ENCODE measurements at regions of chr9 and their contacts with region 1.

Region 1: GRCh38 chr9:121185774-121186403 is 15.8 kb downstream of the RAB14 start:
- DNase-seq: no peak
- H3K4me3 ChIP-seq: no peak overlapping the region
- H3K27ac ChIP-seq: no peak overlapping the region
- H3K4me1 ChIP-seq: no peaks in the 10 kb centered on the region
- H3K27me3 ChIP-seq: no peaks in the 10 kb centered on the region
- CTCF ChIP-seq: no peak
- POLR2A ChIP-seq: no peak

Region 2: GRCh38 chr9:121201738-121202533 is 16.0 kb after region 1 on chr9 and contains the start of gene RAB14:
- CTCF ChIA-PET with region 1: interaction called, 6 read pairs
- POLR2A ChIA-PET with region 1: no interaction called
- dilution Hi-C with region 1: no loop called
- intact Hi-C with region 1: loop called (anchors 2 kb)
- DNase-seq: peak; percentile 98
- H3K4me3 ChIP-seq: peak within 1 kb of the TSS; percentile 85 to 94 (median 86)
- H3K27ac ChIP-seq: peak within 1 kb of the TSS; percentile 59
- H3K4me1 ChIP-seq: peaks cover 33% of the 10 kb centered on the region
- H3K27me3 ChIP-seq: no peaks in the 10 kb centered on the region
- CTCF ChIP-seq: peak; percentile 49 to 69
- POLR2A ChIP-seq: peak; percentile 90
- total RNA-seq, gene RAB14: 76.4 and 79.3 TPM in 2 replicates

Measured in endothelial cell of umbilical vein (primary cell).